ENCODE measurements at regions of chr4 and their contacts with region 1.

Region 1: DNA sequence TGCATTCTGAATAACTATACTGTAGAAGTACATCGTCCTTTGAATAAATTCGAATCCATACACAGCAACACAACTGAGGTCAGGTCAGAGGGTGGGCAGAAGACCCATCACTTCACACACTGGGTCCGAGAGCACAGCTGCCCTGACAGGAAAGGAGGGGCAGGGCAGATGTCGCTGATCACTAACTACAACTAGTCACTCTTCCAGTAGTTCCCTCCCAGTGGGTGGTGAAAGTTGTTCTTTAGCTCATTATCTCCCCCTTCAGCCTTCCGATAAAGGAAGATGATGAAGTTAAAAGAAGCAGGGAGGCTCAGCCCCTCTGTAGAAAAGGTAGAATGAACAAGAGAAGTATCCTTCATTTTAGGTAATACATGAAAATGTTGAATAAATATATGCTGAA is 278.9 kb downstream of the INPP4B start:
- DNase-seq: peak; percentile 53
- H3K4me3 Mint-ChIP-seq: peak overlapping the region; percentile 88
- H3K27ac Mint-ChIP-seq: peak overlapping the region; percentile 94
- H3K4me1 Mint-ChIP-seq: peaks cover 55% of the 10 kb centered on the region
- H3K27me3 Mint-ChIP-seq: no peaks in the 10 kb centered on the region

Region 2: DNA sequence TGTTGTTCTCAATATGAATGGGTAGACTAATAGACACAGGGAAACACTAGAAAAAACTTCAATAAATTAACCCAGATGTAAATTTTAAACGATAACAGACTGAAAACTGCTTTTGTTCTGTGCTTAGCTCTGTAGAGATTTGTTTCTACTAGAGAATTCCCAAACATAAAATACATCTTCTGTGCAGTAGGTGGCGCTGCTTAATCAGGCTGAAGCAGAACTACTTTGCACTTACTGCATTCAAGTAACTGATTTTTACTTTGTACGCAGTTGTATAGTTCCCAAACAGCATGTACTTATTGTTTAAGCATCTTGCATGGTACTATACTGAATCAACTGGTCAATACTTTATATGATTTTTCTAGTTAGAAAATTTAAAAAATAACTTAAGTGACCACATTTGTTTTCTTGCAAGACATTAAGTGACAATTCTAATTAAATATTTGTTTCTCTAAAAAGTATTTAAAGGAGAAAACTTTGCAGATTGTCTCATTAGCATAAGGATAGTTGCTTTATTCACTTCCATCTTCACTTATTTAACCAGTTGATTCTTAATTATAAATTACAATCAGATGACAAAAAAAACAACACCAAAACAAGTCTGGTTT is 440.2 kb before region 1 on chr4:
- intact Hi-C with region 1: loop called (anchors 5 kb)
- DNase-seq: peak; percentile 24
- H3K4me3 Mint-ChIP-seq: no peak overlapping the region
- H3K27ac Mint-ChIP-seq: no peak overlapping the region
- H3K4me1 Mint-ChIP-seq: peaks cover 20% of the 10 kb centered on the region
- H3K27me3 Mint-ChIP-seq: no peaks in the 10 kb centered on the region

Region 3: DNA sequence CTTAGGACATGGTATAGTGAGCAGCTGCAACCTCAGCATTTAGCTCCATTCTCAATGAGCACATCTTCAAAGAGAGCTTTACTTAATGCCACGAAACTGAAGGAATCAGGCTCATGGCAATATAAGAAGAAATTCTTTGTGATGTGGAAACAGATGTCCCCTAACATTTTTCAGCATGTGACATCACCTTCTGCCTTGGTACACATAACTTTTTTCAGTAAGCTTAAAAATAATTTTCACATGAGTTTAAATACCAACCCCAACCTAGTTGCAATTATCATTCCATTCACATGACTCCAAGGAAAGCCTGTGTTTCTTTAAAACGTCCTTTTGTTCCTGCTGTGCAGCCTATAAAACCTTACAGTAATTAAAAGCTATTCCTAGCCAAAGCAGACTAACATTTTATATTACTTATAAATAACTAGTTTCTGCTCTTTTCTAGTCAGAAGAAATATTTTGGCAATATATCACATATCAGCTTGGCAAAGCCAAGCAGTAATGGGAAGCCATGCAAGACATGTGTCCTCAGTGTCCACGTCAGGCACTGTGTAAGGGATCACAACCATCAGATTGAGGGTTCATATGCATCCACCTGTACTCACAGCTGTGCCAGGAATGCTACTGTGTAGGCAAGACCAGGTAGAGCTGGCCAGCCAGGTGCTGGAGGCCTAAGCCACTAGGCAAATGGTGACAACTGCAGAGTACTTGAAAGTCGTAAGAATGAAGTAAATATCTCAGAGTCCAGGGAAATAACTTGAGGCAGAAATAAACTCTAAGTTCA is 187.7 kb before region 1 on chr4:
- intact Hi-C with region 1: loop called (anchors 1 kb)
- DNase-seq: no peak
- H3K4me3 Mint-ChIP-seq: no peak overlapping the region
- H3K27ac Mint-ChIP-seq: peak overlapping the region; percentile 76
- H3K4me1 Mint-ChIP-seq: peaks cover 71% of the 10 kb centered on the region
- H3K27me3 Mint-ChIP-seq: no peaks in the 10 kb centered on the region

Region 4: DNA sequence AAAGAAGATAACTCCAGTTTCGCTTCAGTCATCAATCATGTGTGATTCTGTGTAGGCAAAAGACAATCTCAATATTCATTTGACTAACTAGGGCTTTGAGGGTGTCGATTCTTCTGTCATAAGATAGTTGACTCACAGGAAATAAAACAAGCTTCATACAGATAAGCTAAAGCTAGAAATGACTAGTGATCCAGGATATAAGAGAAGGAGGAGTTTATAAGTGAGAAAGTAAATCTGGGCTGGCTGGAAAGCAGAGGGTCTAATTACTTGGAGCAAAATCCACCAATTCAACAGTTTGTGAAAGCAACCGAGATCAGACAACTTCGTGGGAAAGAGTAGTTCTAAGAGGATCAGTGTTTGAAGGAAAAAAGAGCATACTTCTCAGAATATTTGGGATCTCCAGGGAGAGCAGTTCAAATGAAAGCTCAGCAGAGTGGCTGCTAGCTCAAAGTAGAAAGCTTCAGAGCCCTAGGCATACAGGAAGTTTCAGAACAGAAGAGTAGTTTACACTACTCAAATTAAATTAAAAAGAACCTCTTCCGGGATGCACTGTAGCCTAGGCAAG is 150.4 kb before region 1 on chr4:
- intact Hi-C with region 1: loop called (anchors 1 kb)
- DNase-seq: no peak
- H3K4me3 Mint-ChIP-seq: peak overlapping the region; percentile 76
- H3K27ac Mint-ChIP-seq: peak overlapping the region; percentile 98
- H3K4me1 Mint-ChIP-seq: peaks cover 49% of the 10 kb centered on the region
- H3K27me3 Mint-ChIP-seq: no peaks in the 10 kb centered on the region

Region 5: GRCh38 chr4:142703694-142704309 is 136.6 kb after region 1 on chr4:
- intact Hi-C with region 1: loop called (anchors 2 kb)
- DNase-seq: peak; percentile 53
- H3K4me3 Mint-ChIP-seq: no peak overlapping the region
- H3K27ac Mint-ChIP-seq: no peak overlapping the region
- H3K4me1 Mint-ChIP-seq: peaks cover 29% of the 10 kb centered on the region
- H3K27me3 Mint-ChIP-seq: no peaks in the 10 kb centered on the region

Region 6: GRCh38 chr4:143184217-143185116 is 617.3 kb after region 1 on chr4 and contains the start of gene USP38:
- intact Hi-C with region 1: loop called (anchors 5 kb)
- DNase-seq: peak; percentile 81
- H3K4me3 Mint-ChIP-seq: peak within 1 kb of the TSS; percentile 89
- H3K27ac Mint-ChIP-seq: peak within 1 kb of the TSS; percentile 96
- H3K4me1 Mint-ChIP-seq: peaks cover 31% of the 10 kb centered on the region
- H3K27me3 Mint-ChIP-seq: no peaks in the 10 kb centered on the region
- total RNA-seq, gene USP38: 23.5 and 26.2 TPM in 2 replicates